K562 (cell line): ENCODE measurements at regions of chrX and their contacts with region 1.

Region 1: GRCh38 chrX:87664381-87664780 is 146.8 kb downstream of the KLHL4 start:
- DNase-seq: peak in 3 of 4 experiments; percentile 2 to 27 (median 3)
- ATAC-seq: 0 out of 3 replicates have a peak, but pooled peaks have one; percentile 52
- H3K4me3 ChIP-seq: no peak overlapping the region
- H3K27ac ChIP-seq: no peak overlapping the region
- H3K4me1 ChIP-seq: no peaks in the 10 kb centered on the region
- H3K27me3 ChIP-seq: no peaks in the 10 kb centered on the region
- CTCF ChIP-seq: peak in 1 of 3 experiments; percentile 44; a peak in 2 of 6 replicates
- EP300 ChIP-seq: no peak
- POLR2A ChIP-seq: no peak
- RAD21 ChIP-seq: peak; percentile 57 to 79

Region 2: DNA sequence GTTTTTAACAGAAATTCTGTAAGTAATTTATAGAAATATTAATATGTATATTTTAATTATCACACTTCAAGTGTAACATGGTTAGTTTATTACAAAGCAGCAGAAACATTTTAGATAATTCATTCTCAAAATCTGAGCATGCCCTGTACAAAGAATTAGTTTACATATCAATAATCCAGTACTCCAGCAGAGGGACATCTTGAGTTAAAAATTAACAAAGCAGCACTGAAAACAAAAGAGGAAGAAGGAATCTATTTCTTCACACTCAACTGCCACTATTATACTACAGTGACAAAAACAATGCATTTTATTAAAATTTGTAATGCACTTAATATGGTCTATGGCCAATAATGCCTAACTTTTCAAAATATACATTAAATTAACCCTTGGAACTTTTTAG is 325.9 kb before region 1 on chrX:
- CTCF ChIA-PET with region 1: interaction called, 11 read pairs
- POLR2A ChIA-PET with region 1: no interaction called
- in situ Hi-C with region 1: no loop called
- intact Hi-C with region 1: loop called (anchors 1 kb)
- DNase-seq: peak in 2 of 4 experiments; percentile 2 to 20
- ATAC-seq: peak; percentile 53; the same call in 1 of the 3 replicates
- H3K4me3 ChIP-seq: no peak overlapping the region
- H3K27ac ChIP-seq: no peak overlapping the region
- H3K4me1 ChIP-seq: no peaks in the 10 kb centered on the region
- H3K27me3 ChIP-seq: no peaks in the 10 kb centered on the region
- CTCF ChIP-seq: peak in 1 of 3 experiments; percentile 34; a peak in 1 of 6 replicates
- EP300 ChIP-seq: no peak
- POLR2A ChIP-seq: no peak
- RAD21 ChIP-seq: peak; percentile 57 to 66

Region 3: DNA sequence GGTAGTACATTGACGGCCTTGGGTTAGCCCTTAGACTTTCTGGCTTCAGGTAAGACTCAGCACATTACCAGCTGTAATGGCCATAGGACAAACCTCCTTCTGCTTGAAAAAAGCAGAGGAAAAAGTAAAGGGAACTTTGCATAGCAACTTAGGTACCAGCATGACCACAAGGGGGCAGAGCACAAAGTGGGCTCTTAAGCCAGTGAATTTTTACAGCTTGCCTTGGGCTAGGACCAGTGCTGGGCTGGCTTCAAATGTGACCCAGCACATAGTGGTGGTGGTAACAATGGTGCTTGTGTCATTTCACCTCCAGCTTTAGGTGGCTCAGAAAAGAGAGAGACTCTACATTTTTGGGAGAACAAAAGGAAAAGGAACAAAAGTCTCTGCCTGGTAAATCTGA is 80.7 kb before region 1 on chrX:
- CTCF ChIA-PET with region 1: interaction called, 3 read pairs
- POLR2A ChIA-PET with region 1: interaction called, 4 read pairs
- in situ Hi-C with region 1: loop called (anchors 10 kb)
- intact Hi-C with region 1: loop called (anchors 1 kb)
- DNase-seq: peak in 2 of 4 experiments; percentile 8 to 47
- ATAC-seq: peak; percentile 54
- H3K4me3 ChIP-seq: no peak overlapping the region
- H3K27ac ChIP-seq: no peak overlapping the region
- H3K4me1 ChIP-seq: peaks cover 0 to 3% of the 10 kb centered on the region in 2 experiments; a peak in 2 of 5 replicates
- H3K27me3 ChIP-seq: no peaks in the 10 kb centered on the region
- CTCF ChIP-seq: peak; percentile 21 to 32 (median 21); a peak in 1 of 6 replicates
- EP300 ChIP-seq: no peak
- POLR2A ChIP-seq: no peak
- RAD21 ChIP-seq: no peak